Naive thymus-derived CD4-positive, alpha-beta T cell (primary cell): ENCODE measurements at regions of chr4 and their contacts with region 1.

Region 1: DNA sequence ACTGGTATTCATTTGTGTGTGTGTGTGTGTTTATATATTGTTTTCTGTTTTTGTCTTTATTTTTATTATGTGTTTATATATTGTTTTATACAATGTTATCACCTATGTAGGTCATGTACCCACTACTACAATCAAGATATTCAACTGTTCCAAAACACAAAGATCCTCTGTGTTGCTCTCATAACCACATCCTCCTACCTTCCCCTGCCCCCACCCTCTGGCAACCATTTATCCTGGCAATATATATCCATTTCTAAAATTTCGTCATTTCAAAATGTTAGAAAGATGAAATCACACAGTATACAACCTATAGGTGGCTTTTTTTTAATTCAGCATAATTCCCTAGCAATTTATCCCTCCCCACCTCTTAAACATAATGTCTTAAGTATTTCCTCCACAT is 18.8 kb upstream of the RPL34 start:
- DNase-seq: peak in 6 of 9 donors; percentile 25 to 69 (median 40)
- ATAC-seq: peak; percentile 67
- H3K4me3 ChIP-seq: no peak overlapping the region
- H3K4me3 Mint-ChIP-seq: peak overlapping the region; percentile 13 to 66 (median 49)
- H3K27ac ChIP-seq: no peak overlapping the region
- H3K27ac Mint-ChIP-seq: peak overlapping the region in 8 of 9 donors; percentile 34 to 81 (median 58)
- H3K4me1 ChIP-seq: peaks cover 0 to 15% of the 10 kb centered on the region in 2 donors
- H3K4me1 Mint-ChIP-seq: peaks cover 9 to 34% (median 28%) of the 10 kb centered on the region in 7 donors
- H3K27me3 ChIP-seq: no peaks in the 10 kb centered on the region
- H3K27me3 Mint-ChIP-seq: no peaks in the 10 kb centered on the region

Region 2: GRCh38 chr4:108045694-108046038 is 555.9 kb before region 1 on chr4:
- CTCF ChIA-PET with region 1: no interaction called
- POLR2A ChIA-PET with region 1: no interaction called
- intact Hi-C with region 1: loop called in 1 of 2 experiments (anchors 1 kb)
- DNase-seq: peak in 4 of 9 donors; percentile 47 to 67 (median 60)
- ATAC-seq: peak; percentile 54
- H3K4me3 ChIP-seq: no peak overlapping the region
- H3K4me3 Mint-ChIP-seq: peak overlapping the region in 6 of 10 donors; percentile 15 to 69 (median 53)
- H3K27ac ChIP-seq: peak overlapping the region; percentile 71
- H3K27ac Mint-ChIP-seq: peak overlapping the region; percentile 46 to 99 (median 89)
- H3K4me1 ChIP-seq: peaks cover 10 to 57% of the 10 kb centered on the region in 2 donors
- H3K4me1 Mint-ChIP-seq: peaks cover 31 to 80% (median 73%) of the 10 kb centered on the region in 7 donors
- H3K27me3 ChIP-seq: no peaks in the 10 kb centered on the region
- H3K27me3 Mint-ChIP-seq: no peaks in the 10 kb centered on the region

Region 3: GRCh38 chr4:108620101-108620932 is 18.8 kb after region 1 on chr4 and contains the start of gene RPL34:
- CTCF ChIA-PET with region 1: no interaction called
- POLR2A ChIA-PET with region 1: interaction called, 14 read pairs
- intact Hi-C with region 1: loop called in 1 of 2 experiments (anchors 1 kb)
- DNase-seq: peak; percentile 85 to 99 (median 96)
- ATAC-seq: peak; percentile 100
- H3K4me3 ChIP-seq: peak within 1 kb of the TSS; percentile 98
- H3K4me3 Mint-ChIP-seq: peak within 1 kb of the TSS; percentile 87 to 99 (median 96)
- H3K27ac ChIP-seq: peak within 1 kb of the TSS; percentile 90
- H3K27ac Mint-ChIP-seq: peak within 1 kb of the TSS; percentile 95 to 99 (median 97)
- H3K4me1 ChIP-seq: peaks cover 29 to 30% of the 10 kb centered on the region in 2 donors
- H3K4me1 Mint-ChIP-seq: peaks cover 33 to 81% (median 66%) of the 10 kb centered on the region in 7 donors
- H3K27me3 ChIP-seq: no peaks in the 10 kb centered on the region
- H3K27me3 Mint-ChIP-seq: peaks cover 0 to 3% (median 0%) of the 10 kb centered on the region in 5 donors
- total RNA-seq, gene RPL34: 1,411 to 3,442 (median 3,215) TPM

Region 4: DNA sequence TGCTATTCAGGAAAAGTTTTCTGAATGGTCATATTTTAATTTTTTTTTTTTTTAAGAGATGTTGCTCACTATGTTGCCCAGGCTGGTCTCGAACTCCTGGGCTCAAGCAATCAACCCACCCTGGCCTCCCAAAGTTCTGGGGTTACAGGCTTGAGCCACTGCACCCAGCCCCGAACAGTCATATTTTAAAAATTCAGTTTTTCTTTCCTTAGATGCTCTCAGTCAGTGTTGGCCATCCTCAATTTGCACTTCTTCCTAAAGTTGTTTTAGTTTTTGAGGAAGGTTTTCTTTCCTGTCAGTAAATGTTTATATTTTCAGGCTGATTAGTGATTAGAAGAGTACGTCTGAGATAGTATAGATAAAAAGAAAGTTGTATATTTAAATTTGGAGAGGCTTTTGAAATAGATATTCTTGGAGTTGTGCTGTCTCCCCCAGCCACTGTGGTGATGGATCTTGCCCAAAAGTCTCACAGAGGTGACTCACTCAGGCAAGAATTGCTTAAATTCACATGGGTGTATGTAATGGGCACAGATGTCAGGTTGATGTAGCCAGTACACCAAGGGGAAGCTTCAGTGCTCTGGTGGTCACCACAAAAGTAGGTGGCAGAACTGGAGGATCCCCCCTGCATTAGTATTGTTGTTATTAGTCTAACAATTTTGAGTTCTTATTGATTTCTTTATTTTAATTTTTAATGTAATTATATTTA is 1669.1 kb after region 1 on chr4:
- CTCF ChIA-PET with region 1: no interaction called
- POLR2A ChIA-PET with region 1: no interaction called
- intact Hi-C with region 1: no loop called
- DNase-seq: no peak
- ATAC-seq: no peak
- H3K4me3 ChIP-seq: no peak overlapping the region
- H3K4me3 Mint-ChIP-seq: no peak overlapping the region
- H3K27ac ChIP-seq: no peak overlapping the region
- H3K27ac Mint-ChIP-seq: no peak overlapping the region
- H3K4me1 ChIP-seq: no peaks in the 10 kb centered on the region
- H3K4me1 Mint-ChIP-seq: peaks cover 0 to 10% (median 0%) of the 10 kb centered on the region in 7 donors
- H3K27me3 ChIP-seq: no peaks in the 10 kb centered on the region
- H3K27me3 Mint-ChIP-seq: peaks cover 0 to 25% (median 0%) of the 10 kb centered on the region in 5 donors